Prostate gland (tissue), 2 donors: ENCODE measurements at regions of chr1 and their contacts with region 1.

Region 1: DNA sequence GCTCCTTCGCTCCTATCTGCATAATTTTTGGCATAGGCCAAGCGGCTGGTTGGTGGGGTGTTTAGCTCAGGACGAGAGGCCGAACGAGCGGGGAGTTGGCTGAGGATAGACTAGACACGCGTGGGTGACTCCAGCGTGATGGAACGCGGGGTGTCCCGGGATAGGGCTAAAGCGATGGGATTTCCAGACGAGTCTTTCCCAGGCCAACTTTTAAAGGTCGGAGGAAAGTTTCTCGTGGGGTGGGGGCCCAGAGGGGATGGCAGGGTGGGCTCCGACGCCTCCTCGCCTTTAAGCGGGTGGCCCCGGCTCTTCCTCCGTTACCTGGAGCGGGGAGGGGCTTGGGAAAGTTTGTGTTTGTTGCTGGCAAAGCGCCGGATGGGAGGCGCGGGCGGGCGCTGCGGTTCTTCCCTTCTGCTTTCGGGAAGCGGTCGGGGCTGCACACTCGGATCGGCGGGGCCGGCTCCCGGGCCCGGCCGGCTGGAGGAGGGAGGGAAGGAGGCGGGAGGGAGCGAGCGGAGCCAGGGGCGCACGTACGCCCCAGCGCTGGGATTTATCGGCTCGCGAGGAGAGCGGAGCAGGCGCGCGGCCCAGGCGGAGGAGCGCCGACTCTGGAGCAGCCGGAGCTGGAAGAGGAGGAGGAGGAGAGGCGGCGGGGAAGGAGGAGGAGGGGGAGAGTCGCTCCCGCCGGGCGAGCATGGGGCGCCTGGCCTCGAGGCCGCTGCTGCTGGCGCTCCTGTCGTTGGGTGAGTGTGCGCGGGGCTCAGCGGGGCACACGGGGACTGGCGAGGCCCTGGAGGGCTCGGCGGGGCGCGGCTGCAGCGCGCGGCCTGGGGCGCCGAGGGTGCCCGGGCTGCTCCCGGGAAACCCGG is at the start of gene PTGFRN:
- DNase-seq: peak; percentile 64
- H3K4me3 ChIP-seq: peak within 1 kb of the TSS; percentile 70 to 73
- H3K27ac ChIP-seq: peak within 1 kb of the TSS; percentile 85 to 87
- H3K4me1 ChIP-seq: no peaks in the 10 kb centered on the region
- H3K27me3 ChIP-seq: no peaks in the 10 kb centered on the region
- CTCF ChIP-seq: no peak
- POLR2A ChIP-seq: peak; percentile 56
- total RNA-seq, gene PTGFRN: 37.1 to 70.7 TPM

Region 2: GRCh38 chr1:116833718-116834117 is 76.0 kb before region 1 on chr1:
- intact Hi-C with region 1: no loop called
- DNase-seq: no peak
- H3K4me3 ChIP-seq: no peak overlapping the region
- H3K27ac ChIP-seq: no peak overlapping the region
- H3K4me1 ChIP-seq: no peaks in the 10 kb centered on the region
- H3K27me3 ChIP-seq: no peaks in the 10 kb centered on the region
- CTCF ChIP-seq: no peak
- POLR2A ChIP-seq: no peak

Region 3: DNA sequence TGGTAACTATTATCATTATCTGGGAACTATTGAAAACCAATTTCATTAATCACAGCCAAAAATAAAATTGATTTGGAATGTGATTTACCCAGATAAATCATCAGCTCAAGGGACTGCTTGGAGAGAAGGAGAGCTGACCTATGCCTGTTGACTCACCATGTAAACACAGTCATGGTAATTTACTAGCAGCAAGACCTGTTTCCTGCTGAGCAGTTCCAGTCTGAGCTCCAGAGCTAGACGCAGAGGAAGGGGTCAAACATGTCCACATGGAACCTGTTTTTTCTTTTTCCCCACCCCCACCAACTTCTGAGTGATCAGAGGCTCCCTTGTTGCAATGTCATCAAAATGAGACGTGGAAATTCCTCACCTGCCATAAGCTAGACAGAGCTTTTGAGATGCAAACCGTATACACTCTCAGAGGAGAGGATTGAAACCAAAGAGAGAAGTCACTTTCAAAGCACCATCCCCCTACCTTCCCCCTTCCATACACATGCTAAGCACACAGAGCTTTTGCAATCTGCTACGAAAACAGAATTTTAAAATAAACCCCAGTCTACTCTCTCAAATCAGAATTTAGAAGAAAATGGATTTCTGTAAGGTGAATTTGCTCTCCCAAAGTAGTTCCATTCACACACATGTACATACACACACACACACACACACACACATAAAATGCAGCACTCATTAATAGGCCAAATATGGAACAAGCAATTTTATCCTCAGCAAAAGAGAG is 55.9 kb before region 1 on chr1:
- intact Hi-C with region 1: loop called (anchors 5 kb)
- DNase-seq: peak; percentile 49
- H3K4me3 ChIP-seq: no peak overlapping the region
- H3K27ac ChIP-seq: no peak overlapping the region
- H3K4me1 ChIP-seq: no peaks in the 10 kb centered on the region
- H3K27me3 ChIP-seq: no peaks in the 10 kb centered on the region
- CTCF ChIP-seq: no peak
- POLR2A ChIP-seq: no peak

Region 4: GRCh38 chr1:116878804-116879477 is 30.8 kb before region 1 on chr1:
- intact Hi-C with region 1: loop called (anchors 2 kb)
- DNase-seq: peak; percentile 69
- H3K4me3 ChIP-seq: no peak overlapping the region
- H3K27ac ChIP-seq: peak overlapping the region in 1 of 2 donors; percentile 3
- H3K4me1 ChIP-seq: no peaks in the 10 kb centered on the region
- H3K27me3 ChIP-seq: no peaks in the 10 kb centered on the region
- CTCF ChIP-seq: no peak
- POLR2A ChIP-seq: no peak

Region 5: DNA sequence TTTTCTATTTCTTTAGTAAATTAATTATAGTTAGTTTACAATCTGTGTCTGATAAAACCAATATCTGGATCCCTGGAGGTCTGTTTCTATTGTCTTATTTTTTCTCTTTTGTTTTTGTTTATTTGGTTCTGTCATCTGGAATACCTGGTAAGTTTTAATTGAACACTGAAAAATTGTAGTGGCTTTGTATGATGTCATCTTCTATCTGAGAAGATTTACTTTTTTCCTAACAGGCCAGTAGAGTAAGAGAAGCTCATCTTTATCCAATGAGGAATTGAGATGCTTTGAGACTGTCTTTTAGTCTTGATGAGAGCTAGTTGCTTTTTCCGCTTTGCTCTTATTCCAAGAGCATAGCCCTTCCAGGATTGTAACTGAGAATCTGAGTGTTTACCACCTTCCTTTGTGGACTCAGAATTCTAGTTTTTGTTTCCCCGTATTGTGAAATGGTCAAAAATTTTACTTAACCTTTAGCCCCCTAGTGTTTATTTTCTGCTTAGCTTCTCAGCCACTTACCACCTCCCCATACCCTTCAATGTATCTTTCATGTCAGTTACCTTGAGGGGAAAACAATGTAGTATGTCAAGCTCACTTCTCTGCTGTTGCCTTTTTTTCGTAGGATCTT is 25.0 kb after region 1 on chr1:
- intact Hi-C with region 1: no loop called
- DNase-seq: no peak
- H3K4me3 ChIP-seq: no peak overlapping the region
- H3K27ac ChIP-seq: no peak overlapping the region
- H3K4me1 ChIP-seq: no peaks in the 10 kb centered on the region
- H3K27me3 ChIP-seq: no peaks in the 10 kb centered on the region
- CTCF ChIP-seq: no peak
- POLR2A ChIP-seq: no peak

Region 6: GRCh38 chr1:116951200-116951935 is 41.6 kb after region 1 on chr1:
- intact Hi-C with region 1: loop called (anchors 5 kb)
- DNase-seq: no peak
- H3K4me3 ChIP-seq: no peak overlapping the region
- H3K27ac ChIP-seq: no peak overlapping the region
- H3K4me1 ChIP-seq: no peaks in the 10 kb centered on the region
- H3K27me3 ChIP-seq: no peaks in the 10 kb centered on the region
- CTCF ChIP-seq: no peak
- POLR2A ChIP-seq: no peak

Region 7: GRCh38 chr1:116987256-116987555 is 77.5 kb after region 1 on chr1:
- intact Hi-C with region 1: loop called (anchors 10 kb)
- DNase-seq: peak; percentile 13
- H3K4me3 ChIP-seq: no peak overlapping the region
- H3K27ac ChIP-seq: no peak overlapping the region
- H3K4me1 ChIP-seq: no peaks in the 10 kb centered on the region
- H3K27me3 ChIP-seq: no peaks in the 10 kb centered on the region
- CTCF ChIP-seq: no peak
- POLR2A ChIP-seq: no peak